ENCODE measurements at regions of chr11 and their contacts with region 1.

Region 1: DNA sequence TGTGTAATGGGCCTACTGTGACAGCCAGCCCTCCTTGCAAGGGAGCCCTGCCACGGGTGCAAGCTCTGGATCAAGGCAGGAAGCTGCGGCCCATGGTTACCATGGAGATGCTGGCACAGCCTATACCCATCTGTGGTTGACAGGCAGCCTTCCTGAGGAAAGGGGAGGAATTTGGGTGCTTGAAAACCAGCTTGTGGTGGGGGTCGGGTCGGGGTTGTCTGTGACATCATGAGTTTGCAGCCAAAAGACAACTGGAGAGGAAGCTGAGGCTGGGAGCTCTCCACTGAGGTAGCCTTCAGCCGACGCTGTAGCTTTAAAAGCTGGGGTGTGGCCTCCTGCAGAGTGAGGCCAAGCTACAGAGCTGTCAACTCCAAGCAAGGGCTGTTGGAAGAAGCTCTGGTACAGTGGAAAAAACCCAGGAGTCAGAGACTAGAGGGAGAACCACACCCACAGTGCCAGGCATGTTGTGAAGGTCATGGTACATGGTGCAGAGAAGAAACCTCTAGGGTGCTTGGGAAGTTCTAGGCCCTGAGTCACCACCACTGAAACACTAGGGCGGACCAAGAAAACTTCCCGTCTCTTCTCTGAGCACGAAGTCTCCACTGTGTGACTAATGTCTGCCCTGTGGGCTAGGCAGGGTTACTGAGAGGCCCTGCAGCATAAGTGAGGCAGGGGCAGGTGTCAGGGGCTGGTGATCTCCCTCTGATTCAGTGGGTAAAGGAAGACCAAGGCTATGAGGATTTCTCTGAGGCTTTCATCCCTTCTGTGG is 10.8 kb upstream of the LDHA start:
- DNase-seq: no peak
- ATAC-seq: peak; percentile 88
- H3K4me3 ChIP-seq: peak overlapping the region in 1 of 2 experiments; percentile 23; a peak in 2 of 4 replicates
- H3K27ac ChIP-seq: peak overlapping the region; percentile 95
- H3K4me1 ChIP-seq: peaks cover 24% of the 10 kb centered on the region
- H3K27me3 ChIP-seq: no peaks in the 10 kb centered on the region
- CTCF ChIP-seq: no peak

Region 2: DNA sequence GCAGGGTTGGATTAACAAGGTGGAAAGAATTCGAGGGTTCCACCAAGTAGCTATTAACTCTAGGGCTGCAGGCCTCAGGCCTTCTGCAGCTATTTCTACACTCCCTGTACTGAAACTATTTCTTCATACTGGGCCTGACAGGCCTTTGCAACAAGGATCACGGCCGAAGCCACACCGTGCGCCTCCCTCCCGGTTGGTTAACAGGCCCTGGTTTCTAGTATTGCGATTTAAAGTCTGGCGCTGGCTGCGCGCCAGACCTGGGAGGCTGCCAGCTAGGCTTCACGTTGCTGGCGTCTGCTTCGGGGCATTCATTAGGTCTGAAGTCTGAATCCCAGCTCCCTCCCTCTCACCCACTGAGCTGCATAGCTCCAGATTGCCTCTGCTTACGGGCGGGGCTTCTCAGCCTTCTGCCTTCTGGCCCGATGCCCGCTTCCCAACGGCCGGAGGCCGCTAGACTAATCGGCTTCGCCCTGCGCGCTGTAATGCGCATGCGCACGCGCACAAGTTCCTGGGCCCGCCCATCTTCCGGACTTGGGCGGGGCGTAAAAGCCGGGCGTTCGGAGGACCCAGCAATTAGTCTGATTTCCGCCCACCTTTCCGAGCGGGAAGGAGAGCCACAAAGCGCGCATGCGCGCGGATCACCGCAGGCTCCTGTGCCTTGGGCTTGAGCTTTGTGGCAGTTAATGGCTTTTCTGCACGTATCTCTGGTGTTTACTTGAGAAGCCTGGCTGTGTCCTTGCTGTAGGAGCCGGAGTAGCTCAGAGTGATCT is 12.3 kb after region 1 on chr11:
- CTCF ChIA-PET with region 1: interaction called, 7 read pairs
- POLR2A ChIA-PET with region 1: interaction called, 18 read pairs
- in situ Hi-C with region 1: no loop called
- intact Hi-C with region 1: no loop called
- DNase-seq: peak; percentile 96
- ATAC-seq: peak; percentile 93
- H3K4me3 ChIP-seq: peak overlapping the region; percentile 91 to 100
- H3K27ac ChIP-seq: peak overlapping the region; percentile 99
- H3K4me1 ChIP-seq: peaks cover 18% of the 10 kb centered on the region
- H3K27me3 ChIP-seq: no peaks in the 10 kb centered on the region
- CTCF ChIP-seq: no peak

Region 3: DNA sequence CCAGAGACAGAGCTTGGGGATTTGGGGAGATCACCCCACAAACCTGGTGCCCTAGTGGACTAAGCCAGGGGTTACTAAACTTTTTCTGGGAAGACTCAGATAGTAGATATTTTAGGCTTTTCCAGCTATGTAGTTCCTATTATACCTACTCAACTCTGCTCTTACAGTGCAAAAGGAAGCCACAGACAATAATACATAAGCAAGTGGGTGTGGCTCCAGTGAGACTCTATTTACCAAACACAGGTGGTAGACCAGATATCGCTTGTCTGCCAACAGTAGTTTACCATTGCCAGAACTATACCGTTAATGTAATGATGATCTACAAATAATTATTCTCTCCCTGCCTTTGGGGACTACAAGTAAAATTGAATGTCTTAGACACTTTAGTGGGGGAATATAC is 35.5 kb after region 1 on chr11:
- CTCF ChIA-PET with region 1: no interaction called
- POLR2A ChIA-PET with region 1: no interaction called
- in situ Hi-C with region 1: no loop called
- intact Hi-C with region 1: no loop called
- DNase-seq: no peak
- ATAC-seq: no peak
- H3K4me3 ChIP-seq: no peak overlapping the region
- H3K27ac ChIP-seq: no peak overlapping the region
- H3K4me1 ChIP-seq: no peaks in the 10 kb centered on the region
- H3K27me3 ChIP-seq: no peaks in the 10 kb centered on the region
- CTCF ChIP-seq: no peak

Measured in Panc1 (cell line).